Dendritic cell treated with granulocyte-macrophage colony-stimulating factor and Interleukin-4, amounts not matched to agents 40 ng/mL and 50 ng/mL, for 4 days (primary cell): ENCODE measurements at regions of chr11 and their contacts with region 1.

Region 1: GRCh38 chr11:113314389-113315301 is at the start of gene TTC12:
- H3K4me3 Mint-ChIP-seq: peak within 1 kb of the TSS; percentile 84
- H3K27ac Mint-ChIP-seq: peak within 1 kb of the TSS; percentile 86
- H3K4me1 Mint-ChIP-seq: peaks cover 6% of the 10 kb centered on the region
- H3K27me3 Mint-ChIP-seq: no peaks in the 10 kb centered on the region

Region 2: GRCh38 chr11:112226062-112226830 is 1088.4 kb before region 1 on chr11 and contains the start of gene PTS:
- intact Hi-C with region 1: loop called (anchors 5 kb)
- H3K4me3 Mint-ChIP-seq: peak within 1 kb of the TSS; percentile 86
- H3K27ac Mint-ChIP-seq: peak within 1 kb of the TSS; percentile 98
- H3K4me1 Mint-ChIP-seq: peaks cover 24% of the 10 kb centered on the region
- H3K27me3 Mint-ChIP-seq: no peaks in the 10 kb centered on the region

Region 3: DNA sequence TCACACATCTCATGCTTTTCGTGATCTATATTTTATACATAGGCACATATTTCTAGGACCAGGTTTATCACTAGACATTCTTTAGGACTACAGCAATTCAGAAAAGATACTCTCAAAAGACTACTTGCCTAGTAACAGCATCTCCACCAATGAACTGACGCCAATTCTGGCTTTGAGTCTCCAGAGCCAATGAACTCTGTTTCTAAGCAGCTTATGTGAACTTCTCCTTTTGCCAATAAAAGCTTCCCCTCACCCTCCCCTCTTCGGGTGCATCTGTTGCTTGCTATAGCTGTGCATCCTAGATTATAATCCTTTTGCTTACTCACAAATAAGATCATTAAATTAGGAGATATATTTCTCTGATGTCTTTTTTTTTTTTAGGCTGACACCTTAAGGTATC is 61.5 kb after region 1 on chr11:
- intact Hi-C with region 1: loop called (anchors 5 kb)
- H3K4me3 Mint-ChIP-seq: no peak overlapping the region
- H3K27ac Mint-ChIP-seq: peak overlapping the region; percentile 70
- H3K4me1 Mint-ChIP-seq: peaks cover 32% of the 10 kb centered on the region
- H3K27me3 Mint-ChIP-seq: peaks cover 1% of the 10 kb centered on the region

Region 4: GRCh38 chr11:113730887-113731726 is 416.5 kb after region 1 on chr11:
- intact Hi-C with region 1: loop called (anchors 2 kb)
- H3K4me3 Mint-ChIP-seq: no peak overlapping the region
- H3K27ac Mint-ChIP-seq: no peak overlapping the region
- H3K4me1 Mint-ChIP-seq: peaks cover 15% of the 10 kb centered on the region
- H3K27me3 Mint-ChIP-seq: no peaks in the 10 kb centered on the region

Region 5: DNA sequence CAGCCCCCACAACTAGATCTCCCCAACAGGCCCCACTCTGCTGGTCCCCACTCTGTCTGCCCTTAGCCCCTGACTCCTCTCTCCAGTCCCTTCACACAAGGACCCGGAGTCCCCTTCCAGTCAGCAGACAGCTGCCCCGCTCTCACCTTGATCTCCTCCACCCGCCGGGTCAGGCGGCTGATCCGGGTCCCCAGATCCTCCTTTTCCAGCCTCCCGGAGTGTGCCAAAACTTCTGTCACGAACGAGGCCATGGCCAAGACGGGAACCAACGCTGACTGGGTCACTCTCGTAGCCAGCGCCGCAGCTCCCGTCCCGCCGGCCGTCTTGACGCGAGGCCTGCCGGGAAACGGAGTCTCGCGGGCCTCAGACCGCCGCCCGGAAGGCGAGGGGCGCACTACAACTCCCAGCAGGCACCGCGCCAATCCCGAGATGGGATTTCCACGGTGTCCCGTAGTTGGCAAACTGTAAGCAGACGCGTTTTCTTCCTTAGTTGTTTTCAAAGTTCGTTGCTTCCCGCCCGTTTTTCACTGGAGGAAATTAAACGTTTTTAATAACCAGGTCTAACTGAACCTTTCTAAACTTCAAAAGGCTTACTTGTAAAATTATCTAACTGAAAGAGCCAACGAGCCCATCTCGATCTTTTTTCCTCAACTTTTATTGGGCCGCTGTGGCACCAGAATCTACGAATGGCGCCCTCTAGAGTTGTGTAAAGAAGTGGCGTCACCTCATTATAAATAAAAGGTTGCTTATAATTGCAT is 458.9 kb after region 1 on chr11 and contains the start of gene ZW10:
- intact Hi-C with region 1: loop called (anchors 10 kb)
- H3K4me3 Mint-ChIP-seq: peak within 1 kb of the TSS; percentile 98
- H3K27ac Mint-ChIP-seq: peak within 1 kb of the TSS; percentile 97
- H3K4me1 Mint-ChIP-seq: peaks cover 13% of the 10 kb centered on the region
- H3K27me3 Mint-ChIP-seq: peaks cover 14% of the 10 kb centered on the region

Region 6: GRCh38 chr11:113875234-113876073 is 560.8 kb after region 1 on chr11 and contains the start of gene USP28:
- intact Hi-C with region 1: loop called (anchors 5 kb)
- H3K4me3 Mint-ChIP-seq: peak within 1 kb of the TSS; percentile 92
- H3K27ac Mint-ChIP-seq: peak within 1 kb of the TSS; percentile 99
- H3K4me1 Mint-ChIP-seq: peaks cover 33% of the 10 kb centered on the region
- H3K27me3 Mint-ChIP-seq: no peaks in the 10 kb centered on the region

Region 7: GRCh38 chr11:114400217-114400914 is 1085.7 kb after region 1 on chr11 and contains the starts of genes C11orf71 and RBM7:
- intact Hi-C with region 1: loop called (anchors 10 kb)
- H3K4me3 Mint-ChIP-seq: peak within 1 kb of the TSS; percentile 93
- H3K27ac Mint-ChIP-seq: peak within 1 kb of the TSS; percentile 99
- H3K4me1 Mint-ChIP-seq: peaks cover 36% of the 10 kb centered on the region
- H3K27me3 Mint-ChIP-seq: no peaks in the 10 kb centered on the region